CD14-positive monocyte (primary cell): ENCODE measurements at regions of chr19 and their contacts with region 1.

Region 1: DNA sequence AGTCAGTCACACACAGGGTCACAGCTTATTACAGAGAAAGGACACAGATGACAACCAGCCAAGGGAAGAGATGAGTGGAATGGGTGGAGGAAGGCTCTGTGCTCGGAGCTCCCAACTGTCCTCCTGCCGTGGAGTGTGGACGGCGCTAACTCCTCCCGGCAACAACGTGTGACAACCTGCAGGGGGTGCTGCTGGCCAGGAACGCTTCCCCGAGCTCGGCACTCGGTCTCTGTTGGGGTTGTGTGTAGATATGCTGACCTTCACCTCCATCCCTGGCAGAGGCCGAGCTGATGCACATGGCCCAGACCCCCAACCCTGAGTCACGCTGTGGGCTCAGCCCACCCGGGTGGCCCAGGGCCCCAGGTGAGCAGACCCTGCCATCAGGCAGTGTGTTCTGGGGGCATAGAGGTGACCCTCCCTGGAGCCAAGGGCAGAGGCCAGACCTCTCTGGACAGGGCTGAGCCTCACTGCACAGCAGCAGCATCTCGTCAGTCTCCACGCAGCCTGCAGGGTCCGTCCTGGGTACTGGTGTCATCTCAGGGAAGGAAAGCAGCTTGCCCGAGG is 14.1 kb downstream of the ZNF444 start:
- DNase-seq: no peak
- H3K4me3 ChIP-seq: no peak overlapping the region
- H3K4me3 Mint-ChIP-seq: no peak overlapping the region
- H3K27ac ChIP-seq: no peak overlapping the region
- H3K27ac Mint-ChIP-seq: peak overlapping the region in 1 of 7 donors; percentile 51
- H3K4me1 ChIP-seq: no peaks in the 10 kb centered on the region
- H3K4me1 Mint-ChIP-seq: no peaks in the 10 kb centered on the region
- H3K27me3 ChIP-seq: no peaks in the 10 kb centered on the region
- H3K27me3 Mint-ChIP-seq: no peaks in the 10 kb centered on the region
- CTCF ChIP-seq: peak; percentile 36

Region 2: GRCh38 chr19:55993492-55993891 is 161.7 kb before region 1 on chr19:
- intact Hi-C with region 1: no loop called
- DNase-seq: no peak
- H3K4me3 ChIP-seq: no peak overlapping the region
- H3K4me3 Mint-ChIP-seq: no peak overlapping the region
- H3K27ac ChIP-seq: no peak overlapping the region
- H3K27ac Mint-ChIP-seq: no peak overlapping the region
- H3K4me1 ChIP-seq: no peaks in the 10 kb centered on the region
- H3K4me1 Mint-ChIP-seq: no peaks in the 10 kb centered on the region
- H3K27me3 ChIP-seq: no peaks in the 10 kb centered on the region
- H3K27me3 Mint-ChIP-seq: no peaks in the 10 kb centered on the region
- CTCF ChIP-seq: no peak

Region 3: GRCh38 chr19:56105090-56105701 is 50.0 kb before region 1 on chr19:
- intact Hi-C with region 1: loop called in 1 of 2 experiments (anchors 10 kb)
- DNase-seq: peak; percentile 59 to 74 (median 62)
- H3K4me3 ChIP-seq: no peak overlapping the region
- H3K4me3 Mint-ChIP-seq: peak overlapping the region in 1 of 2 donors; percentile 24
- H3K27ac ChIP-seq: peak overlapping the region; percentile 37 to 66
- H3K27ac Mint-ChIP-seq: peak overlapping the region in 6 of 7 donors; percentile 13 to 81 (median 57)
- H3K4me1 ChIP-seq: peaks cover 24 to 44% of the 10 kb centered on the region in 2 donors
- H3K4me1 Mint-ChIP-seq: peaks cover 46% of the 10 kb centered on the region
- H3K27me3 ChIP-seq: no peaks in the 10 kb centered on the region
- H3K27me3 Mint-ChIP-seq: peaks cover 0 to 3% (median 2%) of the 10 kb centered on the region in 3 donors
- CTCF ChIP-seq: peak; percentile 85